ENCODE measurements at regions of chr18 and their contacts with region 1.

Region 1: DNA sequence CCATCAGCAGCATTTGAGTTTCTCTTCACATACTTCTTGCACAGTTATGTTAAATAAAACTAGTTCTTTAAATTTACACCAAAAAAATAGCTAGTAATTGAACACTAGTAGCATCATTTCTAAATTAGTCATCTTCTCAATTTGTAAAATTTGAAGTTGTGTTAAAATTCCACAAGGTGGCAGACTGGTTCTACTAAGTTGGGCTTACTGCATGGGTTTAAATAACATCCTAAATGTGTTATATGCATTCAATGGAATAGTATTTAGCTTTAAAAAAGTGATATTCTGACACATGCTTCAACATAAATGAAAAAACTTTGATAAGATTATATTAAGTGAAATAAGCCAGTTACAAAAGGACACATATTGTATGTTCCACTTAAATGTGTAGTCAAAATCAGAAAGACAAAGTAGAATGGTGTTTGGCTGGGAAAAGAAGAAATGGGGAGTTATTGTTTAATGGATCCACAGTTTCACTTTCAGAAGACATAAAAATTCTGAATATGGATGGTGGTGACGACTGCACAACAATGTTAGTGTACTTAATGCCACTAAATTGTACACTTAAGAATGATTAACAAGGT is 28.7 kb upstream of the RPRD1A start:
- DNase-seq: peak; percentile 53
- H3K4me3 ChIP-seq: no peak overlapping the region
- CTCF ChIP-seq: peak; percentile 24

Region 2: GRCh38 chr18:36078751-36079529 is 17.1 kb before region 1 on chr18:
- CTCF ChIA-PET with region 1: interaction called, 11 read pairs
- POLR2A ChIA-PET with region 1: no interaction called
- DNase-seq: no peak
- H3K4me3 ChIP-seq: no peak overlapping the region
- CTCF ChIP-seq: no peak

Region 3: GRCh38 chr18:36120300-36120778 is 24.3 kb after region 1 on chr18:
- CTCF ChIA-PET with region 1: interaction called, 10 read pairs
- POLR2A ChIA-PET with region 1: no interaction called
- DNase-seq: no peak
- H3K4me3 ChIP-seq: no peak overlapping the region
- CTCF ChIP-seq: no peak